Activated CD4-positive, alpha-beta T cell treated with anti-CD3 and anti-CD28 coated beads for 36 hours (primary cell): ENCODE measurements at regions of chr12 and their contacts with region 1.

Region 1: GRCh38 chr12:131290255-131290959 is 336.7 kb downstream of the ADGRD1 start:
- DNase-seq: no peak
- ATAC-seq: no peak
- H3K4me3 Mint-ChIP-seq: no peak overlapping the region
- H3K27ac Mint-ChIP-seq: no peak overlapping the region
- H3K4me1 Mint-ChIP-seq: no peaks in the 10 kb centered on the region
- H3K27me3 Mint-ChIP-seq: peaks cover 3% of the 10 kb centered on the region

Region 2: GRCh38 chr12:130571089-130571488 is 719.3 kb before region 1 on chr12:
- CTCF ChIA-PET with region 1: no interaction called
- POLR2A ChIA-PET with region 1: no interaction called
- intact Hi-C with region 1: no loop called
- DNase-seq: peak; percentile 28
- ATAC-seq: peak; percentile 61
- H3K4me3 Mint-ChIP-seq: no peak overlapping the region
- H3K27ac Mint-ChIP-seq: no peak overlapping the region
- H3K4me1 Mint-ChIP-seq: no peaks in the 10 kb centered on the region
- H3K27me3 Mint-ChIP-seq: no peaks in the 10 kb centered on the region

Region 3: DNA sequence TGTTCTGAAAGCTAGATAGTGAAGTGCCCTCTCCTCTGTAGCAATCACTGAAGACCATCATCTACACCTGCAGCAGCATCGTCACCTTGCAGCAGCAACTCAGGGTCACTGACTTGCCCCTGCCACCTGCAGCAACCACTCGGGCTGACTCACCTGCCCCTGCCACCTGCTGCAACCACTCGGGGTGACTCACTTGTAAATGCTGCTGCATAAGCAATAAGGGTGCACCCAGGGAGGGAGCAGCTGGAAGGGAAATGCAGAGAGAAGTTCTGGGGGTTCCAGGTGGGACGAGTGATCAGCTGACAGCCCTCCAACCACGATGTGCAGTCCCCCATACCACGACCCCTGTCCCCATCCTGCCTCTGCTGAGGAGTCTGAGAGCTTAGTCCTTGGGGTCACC is 63.4 kb after region 1 on chr12:
- CTCF ChIA-PET with region 1: no interaction called
- POLR2A ChIA-PET with region 1: no interaction called
- intact Hi-C with region 1: no loop called
- DNase-seq: no peak
- ATAC-seq: no peak
- H3K4me3 Mint-ChIP-seq: no peak overlapping the region
- H3K27ac Mint-ChIP-seq: no peak overlapping the region
- H3K4me1 Mint-ChIP-seq: no peaks in the 10 kb centered on the region
- H3K27me3 Mint-ChIP-seq: peaks cover 15% of the 10 kb centered on the region

Region 4: GRCh38 chr12:131673888-131674257 is 383.5 kb after region 1 on chr12:
- CTCF ChIA-PET with region 1: no interaction called
- POLR2A ChIA-PET with region 1: no interaction called
- intact Hi-C with region 1: loop called in 1 of 2 experiments (anchors 5 kb)
- DNase-seq: no peak
- ATAC-seq: no peak
- H3K4me3 Mint-ChIP-seq: no peak overlapping the region
- H3K27ac Mint-ChIP-seq: no peak overlapping the region
- H3K4me1 Mint-ChIP-seq: no peaks in the 10 kb centered on the region
- H3K27me3 Mint-ChIP-seq: peaks cover 2% of the 10 kb centered on the region